Colonic mucosa (tissue), 4 donors: ENCODE measurements at regions of chr17 and their contacts with region 1.

Region 1: DNA sequence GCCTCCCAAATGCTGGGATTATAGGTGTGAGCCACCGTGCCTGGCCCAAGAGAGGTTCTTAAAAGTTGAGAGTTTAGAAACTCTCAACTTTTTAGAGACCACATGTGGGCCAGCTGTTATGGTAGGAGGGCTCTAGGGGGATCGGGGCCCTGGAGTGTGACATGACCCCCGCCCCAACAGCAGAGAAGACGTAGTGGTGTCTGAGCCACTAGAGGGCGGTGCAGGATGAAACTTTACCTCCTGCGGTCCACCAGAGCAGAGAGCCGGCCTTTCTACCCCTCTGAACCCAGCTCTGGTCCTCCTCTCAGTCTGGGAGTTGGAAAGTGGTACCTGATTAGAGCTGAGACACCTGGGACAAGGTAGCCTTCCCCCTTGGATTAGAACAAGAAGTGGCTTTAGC is 7.4 kb downstream of the CDK5RAP3 start:
- DNase-seq: no peak
- H3K4me3 ChIP-seq: no peak overlapping the region
- H3K27ac ChIP-seq: no peak overlapping the region
- H3K4me1 ChIP-seq: no peaks in the 10 kb centered on the region
- H3K27me3 ChIP-seq: no peaks in the 10 kb centered on the region
- CTCF ChIP-seq: peak; percentile 60

Region 2: GRCh38 chr17:47905221-47905781 is 73.0 kb before region 1 on chr17:
- intact Hi-C with region 1: no loop called
- DNase-seq: peak; percentile 40
- H3K4me3 ChIP-seq: no peak overlapping the region
- H3K27ac ChIP-seq: peak overlapping the region; percentile 39
- H3K4me1 ChIP-seq: no peaks in the 10 kb centered on the region
- H3K27me3 ChIP-seq: no peaks in the 10 kb centered on the region
- CTCF ChIP-seq: no peak

Region 3: GRCh38 chr17:48016112-48016511 is 37.8 kb after region 1 on chr17:
- intact Hi-C with region 1: loop called (anchors 2 kb)
- DNase-seq: no peak
- H3K4me3 ChIP-seq: no peak overlapping the region
- H3K27ac ChIP-seq: no peak overlapping the region
- H3K4me1 ChIP-seq: peaks cover 5% of the 10 kb centered on the region
- H3K27me3 ChIP-seq: peaks cover 11% of the 10 kb centered on the region
- CTCF ChIP-seq: no peak

Region 4: DNA sequence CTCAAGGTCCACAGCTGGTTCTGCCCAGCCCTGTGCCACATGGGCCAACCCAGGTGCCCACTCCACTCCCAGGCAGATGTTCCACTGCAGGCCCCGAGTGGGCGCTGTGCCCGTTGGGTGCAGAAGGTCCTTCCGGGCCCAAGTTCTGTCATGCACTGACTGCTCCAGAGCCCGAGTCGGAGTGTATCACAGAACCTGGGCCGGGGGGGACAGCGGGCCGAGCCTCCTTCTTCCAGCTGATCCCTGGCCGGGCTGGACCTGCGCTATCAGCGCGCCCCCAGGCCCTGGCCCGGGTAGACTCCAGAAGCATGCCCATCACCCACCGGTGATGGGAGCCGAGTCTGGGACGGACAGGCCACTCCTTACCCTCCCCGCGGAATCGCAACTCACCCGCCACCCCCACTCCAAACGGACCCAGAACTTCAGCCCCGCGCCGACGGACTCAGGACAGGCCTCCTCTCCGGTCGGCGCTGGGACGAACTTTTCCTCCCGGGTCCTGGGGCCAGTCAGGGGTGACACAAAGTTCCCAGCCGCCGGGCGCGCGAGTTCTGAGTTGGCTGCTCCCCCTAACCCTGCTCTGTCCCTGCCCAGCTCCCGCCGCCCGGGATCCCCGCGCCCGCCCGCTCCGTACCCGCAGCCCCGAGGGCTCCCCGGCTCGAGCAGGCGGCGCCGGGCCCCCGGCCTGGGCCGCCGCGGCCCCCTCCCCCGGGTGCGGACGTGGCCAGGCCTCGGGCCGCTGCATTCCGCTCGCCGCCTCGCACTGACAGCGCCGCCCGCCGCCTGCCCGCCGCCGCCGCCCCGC is 58.9 kb after region 1 on chr17 and contains the start of gene COPZ2:
- intact Hi-C with region 1: no loop called
- DNase-seq: peak; percentile 53
- H3K4me3 ChIP-seq: peak within 1 kb of the TSS; percentile 71
- H3K27ac ChIP-seq: no peak within 1 kb of the TSS
- H3K4me1 ChIP-seq: peaks cover 5% of the 10 kb centered on the region
- H3K27me3 ChIP-seq: no peaks in the 10 kb centered on the region
- CTCF ChIP-seq: peak; percentile 47
- total RNA-seq, gene COPZ2: 4.3 to 9.9 TPM

Region 5: DNA sequence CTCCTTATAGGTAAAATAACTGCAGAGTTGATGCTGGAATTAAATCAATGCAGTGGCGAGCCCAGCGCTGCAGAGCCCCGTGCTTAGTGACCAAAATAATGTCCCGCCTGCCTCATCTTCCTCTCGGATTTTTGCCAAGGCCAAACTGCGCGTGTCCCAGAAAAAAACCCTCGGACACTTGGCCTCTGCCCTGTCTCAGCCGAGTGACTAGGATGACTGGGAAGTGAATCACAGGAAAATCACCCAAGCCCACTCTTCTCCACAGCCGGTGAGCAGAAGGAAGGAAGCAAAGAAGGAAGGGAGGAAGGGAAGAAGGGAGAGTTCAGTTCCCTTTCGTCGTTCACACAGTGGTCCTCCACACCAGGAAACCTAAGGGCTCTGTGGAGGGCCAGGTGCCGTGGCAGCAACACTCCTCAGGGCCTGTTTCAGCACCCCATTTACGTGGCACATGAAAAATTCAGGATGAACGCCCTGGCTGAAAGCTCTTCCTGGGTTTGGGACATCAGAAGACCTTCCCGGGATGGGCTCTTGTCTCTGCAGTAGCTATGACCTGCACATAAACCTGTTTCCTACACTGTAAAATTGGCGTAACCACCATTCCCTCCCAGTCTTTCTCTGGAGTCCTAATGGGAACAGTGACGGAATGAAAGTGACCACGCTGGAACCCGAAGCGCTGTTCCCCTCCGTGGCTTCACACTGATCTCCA is 775.6 kb after region 1 on chr17:
- intact Hi-C with region 1: no loop called
- DNase-seq: no peak
- H3K4me3 ChIP-seq: no peak overlapping the region
- H3K27ac ChIP-seq: no peak overlapping the region
- H3K4me1 ChIP-seq: no peaks in the 10 kb centered on the region
- H3K27me3 ChIP-seq: peaks cover 49% of the 10 kb centered on the region
- CTCF ChIP-seq: no peak